ENCODE measurements at regions of chr12 and their contacts with region 1.

Region 1: GRCh38 chr12:64801381-64801780 is 23.1 kb upstream of the TBC1D30 start:
- DNase-seq: no peak
- ATAC-seq: peak; percentile 38; the same call in 1 of the 2 replicates
- H3K4me3 ChIP-seq: no peak overlapping the region
- H3K27ac ChIP-seq: no peak overlapping the region
- H3K4me1 ChIP-seq: no peaks in the 10 kb centered on the region; the same call in 1 of the 2 replicates
- H3K27me3 ChIP-seq: peaks cover 23% of the 10 kb centered on the region
- CTCF ChIP-seq: peak; percentile 39; the same call in 1 of the 2 replicates
- POLR2A ChIP-seq: no peak
- RAD21 ChIP-seq: no peak

Region 2: GRCh38 chr12:64824500-64825142 is 23.2 kb after region 1 on chr12 and contains the start of gene TBC1D30:
- CTCF ChIA-PET with region 1: no interaction called
- POLR2A ChIA-PET with region 1: no interaction called
- dilution Hi-C with region 1: no loop called
- in situ Hi-C with region 1: no loop called
- intact Hi-C with region 1: no loop called
- DNase-seq: peak; percentile 2
- ATAC-seq: peak; percentile 81
- H3K4me3 ChIP-seq: peak within 1 kb of the TSS; percentile 33
- H3K27ac ChIP-seq: no peak within 1 kb of the TSS
- H3K4me1 ChIP-seq: no peaks in the 10 kb centered on the region
- H3K27me3 ChIP-seq: peaks cover 42% of the 10 kb centered on the region
- CTCF ChIP-seq: no peak
- POLR2A ChIP-seq: no peak
- RAD21 ChIP-seq: no peak
- total RNA-seq, gene TBC1D30: 0.18 and 0.28 TPM in 2 replicates

Region 3: GRCh38 chr12:65121049-65121955 is 319.9 kb after region 1 on chr12 and contains the start of gene WIF1:
- CTCF ChIA-PET with region 1: no interaction called
- POLR2A ChIA-PET with region 1: no interaction called
- dilution Hi-C with region 1: no loop called
- in situ Hi-C with region 1: no loop called
- intact Hi-C with region 1: loop called (anchors 1 kb)
- DNase-seq: no peak
- ATAC-seq: peak; percentile 51
- H3K4me3 ChIP-seq: peak within 1 kb of the TSS; percentile 25; the same call in 1 of the 2 replicates
- H3K27ac ChIP-seq: no peak within 1 kb of the TSS
- H3K4me1 ChIP-seq: peaks cover 3% of the 10 kb centered on the region
- H3K27me3 ChIP-seq: peaks cover 49% of the 10 kb centered on the region
- CTCF ChIP-seq: peak; percentile 32; the same call in 1 of the 2 replicates
- POLR2A ChIP-seq: no peak
- RAD21 ChIP-seq: no peak
- total RNA-seq, gene WIF1: not detected in 2 replicates

Region 4: GRCh38 chr12:66107451-66107915 is 1306.1 kb after region 1 on chr12:
- CTCF ChIA-PET with region 1: no interaction called
- POLR2A ChIA-PET with region 1: no interaction called
- dilution Hi-C with region 1: no loop called
- in situ Hi-C with region 1: no loop called
- intact Hi-C with region 1: loop called (anchors 10 kb)
- DNase-seq: peak; percentile 94
- ATAC-seq: peak; percentile 99
- H3K4me3 ChIP-seq: no peak overlapping the region
- H3K27ac ChIP-seq: no peak overlapping the region
- H3K4me1 ChIP-seq: peaks cover 4% of the 10 kb centered on the region
- H3K27me3 ChIP-seq: no peaks in the 10 kb centered on the region
- CTCF ChIP-seq: peak; percentile 77
- POLR2A ChIP-seq: no peak
- RAD21 ChIP-seq: peak; percentile 79